PC-9 (cell line): ENCODE measurements at regions of chr12 and their contacts with region 1.

Region 1: GRCh38 chr12:13079440-13079906 is 24.0 kb downstream of the GSG1 start:
- DNase-seq: peak in 1 of 2 experiments; percentile 33
- H3K4me3 ChIP-seq: no peak overlapping the region
- H3K27ac ChIP-seq: no peak overlapping the region
- H3K4me1 ChIP-seq: no peaks in the 10 kb centered on the region
- H3K27me3 ChIP-seq: no peaks in the 10 kb centered on the region
- CTCF ChIP-seq: no peak

Region 2: GRCh38 chr12:13030541-13031291 is 48.8 kb before region 1 on chr12:
- CTCF ChIA-PET with region 1: interaction called, 13 read pairs
- POLR2A ChIA-PET with region 1: no interaction called
- intact Hi-C with region 1: no loop called
- DNase-seq: no peak
- H3K4me3 ChIP-seq: no peak overlapping the region
- H3K27ac ChIP-seq: no peak overlapping the region
- H3K4me1 ChIP-seq: 0 out of 2 replicates have a peak, but pooled peaks cover under 1% of the 10 kb centered on the region
- H3K27me3 ChIP-seq: no peaks in the 10 kb centered on the region
- CTCF ChIP-seq: no peak